ENCODE measurements at regions of chr9 and their contacts with region 1.

Region 1: DNA sequence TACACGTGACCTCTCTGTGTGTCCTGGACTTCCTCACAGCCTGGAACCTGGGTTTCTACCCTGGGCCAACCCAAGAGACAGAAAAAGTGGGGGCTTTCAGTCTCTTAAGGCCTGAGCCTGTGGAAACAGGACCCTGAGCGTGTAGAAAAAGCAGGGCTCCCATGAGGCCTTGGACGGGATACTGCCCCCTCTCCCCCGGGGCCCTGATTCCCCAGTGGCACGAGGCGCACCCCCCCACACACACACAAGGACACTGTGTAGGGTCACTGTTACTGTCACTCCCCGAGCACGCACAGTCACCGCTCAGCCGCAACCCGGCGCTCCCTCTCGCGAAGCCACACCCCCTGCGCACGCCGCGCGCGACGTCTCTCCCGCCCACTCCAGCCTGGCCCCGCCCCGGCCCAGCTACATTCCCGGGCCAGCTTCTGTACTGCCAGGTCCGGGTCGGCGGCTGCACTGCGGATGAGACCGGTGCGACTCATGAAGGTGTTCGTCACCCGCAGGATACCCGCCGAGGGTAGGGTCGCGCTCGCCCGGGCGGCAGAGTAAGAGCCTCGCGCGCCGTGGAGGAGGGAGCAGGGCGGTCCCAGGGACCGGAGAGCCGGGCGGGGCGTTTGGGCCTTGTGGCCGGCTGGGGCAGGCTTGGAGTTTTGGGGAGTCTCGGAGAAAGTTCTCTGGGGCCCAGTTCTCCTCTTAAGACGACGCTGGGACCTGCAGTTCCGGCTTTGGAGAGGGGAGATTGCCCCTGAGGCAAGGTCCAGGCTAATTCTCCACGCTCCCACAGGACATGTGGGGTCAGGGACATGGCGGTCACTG is at the start of gene GRHPR:
- DNase-seq: peak; percentile 84 to 92
- ATAC-seq: peak; percentile 98 to 99 (median 99)
- H3K4me3 ChIP-seq: peak within 1 kb of the TSS; percentile 75
- H3K4me3 Mint-ChIP-seq: peak within 1 kb of the TSS; percentile 94
- H3K27ac ChIP-seq: peak within 1 kb of the TSS; percentile 52
- H3K27ac Mint-ChIP-seq: peak within 1 kb of the TSS; percentile 93 to 98
- H3K4me1 ChIP-seq: peaks cover 22% of the 10 kb centered on the region
- H3K4me1 Mint-ChIP-seq: peaks cover 18 to 20% of the 10 kb centered on the region in 2 donors
- H3K27me3 ChIP-seq: no peaks in the 10 kb centered on the region
- H3K27me3 Mint-ChIP-seq: no peaks in the 10 kb centered on the region
- CTCF ChIP-seq: no peak
- total RNA-seq, gene GRHPR: 38.1 to 55.6 (median 41.1) TPM

Region 2: DNA sequence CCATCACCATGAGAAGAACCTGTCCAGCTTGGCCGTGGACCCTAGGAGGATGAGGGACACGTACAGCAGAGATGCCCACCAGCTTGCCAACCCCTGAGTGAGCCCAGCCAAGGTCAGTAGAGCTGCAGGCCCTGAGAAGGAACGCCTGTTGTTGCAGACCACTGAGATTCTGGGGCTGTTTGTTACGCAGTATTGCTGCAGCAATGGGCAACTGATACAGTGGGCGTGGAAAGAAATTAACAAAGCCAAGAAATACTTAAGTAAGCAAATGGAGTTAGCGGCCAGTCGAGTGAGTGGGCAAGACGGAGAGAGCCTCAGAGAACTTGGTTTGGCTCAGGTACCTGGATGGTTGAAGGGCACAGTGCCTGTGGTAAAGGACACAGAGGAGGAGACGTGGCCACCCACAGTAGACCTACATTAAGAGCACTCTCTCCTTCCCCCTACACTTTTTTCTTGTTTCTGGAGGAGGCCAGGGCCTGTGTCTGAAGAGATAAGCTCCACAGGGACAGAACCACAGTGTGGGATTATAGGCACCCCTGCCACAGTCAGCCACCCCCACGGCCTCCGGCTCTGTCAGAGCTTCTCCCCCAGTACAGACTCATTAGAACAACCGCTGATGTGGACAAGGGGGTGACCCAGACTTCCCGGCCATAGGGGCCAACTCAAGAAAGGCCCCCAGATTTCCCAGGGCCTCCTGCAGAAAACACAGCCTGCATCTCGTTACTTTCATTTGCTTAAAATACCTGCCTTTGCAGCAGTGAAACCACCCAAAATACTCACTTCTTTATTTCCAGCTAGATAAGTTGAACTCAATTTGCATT is 40.1 kb before region 1 on chr9:
- intact Hi-C with region 1: no loop called
- DNase-seq: no peak
- ATAC-seq: no peak
- H3K4me3 ChIP-seq: no peak overlapping the region
- H3K4me3 Mint-ChIP-seq: no peak overlapping the region
- H3K27ac ChIP-seq: peak overlapping the region; percentile 31
- H3K27ac Mint-ChIP-seq: no peak overlapping the region
- H3K4me1 ChIP-seq: peaks cover 20% of the 10 kb centered on the region
- H3K4me1 Mint-ChIP-seq: no peaks in the 10 kb centered on the region
- H3K27me3 ChIP-seq: no peaks in the 10 kb centered on the region
- H3K27me3 Mint-ChIP-seq: peaks cover 0 to 6% of the 10 kb centered on the region in 2 donors
- CTCF ChIP-seq: no peak

Region 3: DNA sequence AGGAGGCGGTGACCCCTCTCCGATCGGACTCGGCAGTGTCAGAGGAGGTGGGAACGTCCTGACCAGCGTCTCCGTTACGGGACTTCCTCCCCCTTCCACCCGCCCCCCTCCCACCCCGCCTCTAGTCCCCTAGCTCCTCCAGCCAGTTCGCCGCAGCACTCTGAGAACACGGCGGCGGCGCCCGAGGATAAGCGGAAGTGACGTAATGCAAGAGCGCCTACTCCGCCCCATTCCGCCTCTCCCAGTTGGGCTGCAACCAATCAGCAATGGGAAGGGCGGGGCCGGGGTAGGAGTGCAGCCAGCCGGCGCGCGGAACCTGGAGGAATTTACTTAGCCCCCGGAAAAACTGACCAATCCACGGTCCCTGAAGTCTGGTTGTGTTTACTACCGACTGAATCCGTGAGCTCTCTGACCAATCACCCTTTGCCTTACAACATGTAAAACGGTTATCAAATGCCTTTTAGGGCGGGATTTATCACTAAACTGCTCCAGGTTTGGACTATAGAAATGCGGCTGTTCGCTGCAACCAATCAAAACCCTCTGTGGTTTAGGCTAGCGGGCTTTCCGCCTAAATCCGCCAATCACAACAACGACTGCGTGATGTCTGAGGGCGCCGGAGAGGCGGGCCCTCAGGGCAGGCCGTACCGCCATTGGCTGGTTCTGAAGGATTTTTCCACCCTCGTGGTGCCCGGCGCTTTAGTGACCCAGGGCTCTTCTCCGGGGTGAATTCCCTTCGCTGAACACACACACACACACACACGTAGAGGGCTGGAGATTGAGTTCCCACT is 42.9 kb after region 1 on chr9 and contains the start of gene ZBTB5:
- intact Hi-C with region 1: loop called (anchors 1 kb)
- DNase-seq: peak; percentile 99
- ATAC-seq: peak; percentile 77 to 90 (median 80)
- H3K4me3 ChIP-seq: peak within 1 kb of the TSS; percentile 94
- H3K4me3 Mint-ChIP-seq: peak within 1 kb of the TSS; percentile 92
- H3K27ac ChIP-seq: peak within 1 kb of the TSS; percentile 98
- H3K27ac Mint-ChIP-seq: peak within 1 kb of the TSS; percentile 94 to 96
- H3K4me1 ChIP-seq: peaks cover 15% of the 10 kb centered on the region
- H3K4me1 Mint-ChIP-seq: peaks cover 26 to 44% of the 10 kb centered on the region in 2 donors
- H3K27me3 ChIP-seq: no peaks in the 10 kb centered on the region
- H3K27me3 Mint-ChIP-seq: no peaks in the 10 kb centered on the region
- CTCF ChIP-seq: no peak
- total RNA-seq, gene ZBTB5: 12.6 to 14.2 (median 13.3) TPM

Region 4: DNA sequence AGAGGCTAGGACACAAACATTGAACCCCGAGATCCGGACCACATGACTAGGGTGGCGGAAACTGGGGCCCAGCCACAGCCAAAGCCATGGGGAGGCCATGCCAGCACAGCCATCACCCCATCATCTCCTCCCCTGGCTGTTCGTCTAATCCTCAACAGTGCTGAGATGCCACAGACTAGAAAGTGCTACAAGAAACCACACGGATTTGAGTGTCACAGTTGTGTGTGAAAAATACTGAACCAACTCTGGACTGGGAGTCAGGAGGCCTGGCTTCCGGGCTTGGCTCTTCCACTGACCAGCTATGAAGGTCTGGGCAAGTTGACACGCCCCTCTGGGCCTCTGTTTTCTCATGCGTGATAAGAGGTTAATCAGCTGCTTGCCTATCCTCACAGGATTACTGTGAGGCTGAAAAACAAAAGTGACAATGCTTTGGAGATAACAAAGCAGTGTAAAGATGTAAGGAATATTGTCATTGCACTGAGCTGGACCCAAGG is 685.4 kb after region 1 on chr9:
- intact Hi-C with region 1: no loop called
- DNase-seq: no peak
- ATAC-seq: no peak
- H3K4me3 ChIP-seq: no peak overlapping the region
- H3K4me3 Mint-ChIP-seq: no peak overlapping the region
- H3K27ac ChIP-seq: no peak overlapping the region
- H3K27ac Mint-ChIP-seq: no peak overlapping the region
- H3K4me1 ChIP-seq: no peaks in the 10 kb centered on the region
- H3K4me1 Mint-ChIP-seq: no peaks in the 10 kb centered on the region
- H3K27me3 ChIP-seq: peaks cover 3% of the 10 kb centered on the region
- H3K27me3 Mint-ChIP-seq: peaks cover 15 to 18% of the 10 kb centered on the region in 2 donors
- CTCF ChIP-seq: no peak

Measured in natural killer cell (primary cell).